Right ventricle myocardium inferior (tissue), 1 donor: ENCODE measurements at regions of chr1 and their contacts with region 1.

Region 1: GRCh38 chr1:145845514-145846161 is at the start of gene NUDT17:
- DNase-seq: peak; percentile 94
- ATAC-seq: peak; percentile 87
- total RNA-seq, gene NUDT17: 3.3 TPM

Region 2: GRCh38 chr1:145906954-145907753 is 61.5 kb after region 1 on chr1:
- intact Hi-C with region 1: loop called (anchors 1 kb)
- DNase-seq: no peak
- ATAC-seq: no peak

Region 3: DNA sequence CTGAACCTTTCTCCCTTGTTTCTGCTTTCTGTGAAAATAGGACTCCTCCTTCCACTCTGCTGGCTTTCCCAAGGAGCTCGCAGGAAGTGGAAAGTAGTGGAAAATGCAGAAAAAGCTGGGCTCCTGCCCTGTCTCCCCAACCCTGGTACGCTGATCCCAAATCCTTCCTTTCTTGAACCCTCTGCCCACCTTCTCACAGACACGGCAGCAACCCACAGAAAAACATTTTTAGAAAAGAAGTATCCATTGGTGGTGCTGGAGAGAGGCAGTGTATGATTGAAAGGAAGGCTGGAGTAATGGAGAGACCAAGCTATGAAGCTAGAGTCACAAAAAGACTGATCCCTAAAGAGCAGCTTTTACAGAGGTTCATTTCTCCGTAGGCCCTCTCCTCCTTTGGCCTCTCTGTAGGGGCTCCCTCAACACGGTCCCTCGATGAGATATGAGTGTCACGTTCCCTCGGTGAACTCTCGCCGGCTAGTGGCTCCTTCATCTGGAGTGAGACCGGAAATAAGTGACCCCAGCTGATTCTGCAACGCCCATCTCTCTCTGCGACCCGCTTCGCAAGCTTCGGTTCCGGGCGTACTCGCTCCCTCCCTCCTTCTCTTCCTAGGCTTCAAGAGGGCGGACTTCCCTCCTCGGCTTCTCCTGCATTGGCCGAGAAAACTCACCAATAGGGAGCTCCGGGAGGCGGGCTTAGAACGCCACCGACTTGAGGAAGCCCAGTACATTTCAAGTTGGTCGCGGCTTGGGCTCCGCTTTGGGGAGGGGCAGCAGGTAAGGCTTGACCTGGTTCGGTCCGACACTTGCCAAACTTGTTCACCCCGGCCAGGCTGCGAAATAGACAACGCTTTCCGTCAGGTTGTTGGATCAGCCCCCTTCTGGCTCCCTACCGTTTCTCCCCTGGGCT is 118.6 kb after region 1 on chr1 and contains the starts of genes ANKRD34A and POLR3GL:
- intact Hi-C with region 1: loop called (anchors 5 kb)
- DNase-seq: peak; percentile 97
- ATAC-seq: peak; percentile 88
- total RNA-seq, gene ANKRD34A: 0.62 TPM
- total RNA-seq, gene POLR3GL: 49.1 TPM

Region 4: GRCh38 chr1:146012737-146013403 is 167.2 kb after region 1 on chr1:
- intact Hi-C with region 1: loop called (anchors 2 kb)
- DNase-seq: no peak
- ATAC-seq: peak; percentile 34